Mammary epithelial cell (primary cell): ENCODE measurements at regions of chr22 and their contacts with region 1.

Region 1: GRCh38 chr22:35840302-35840739 is 122.6 kb downstream of the APOL5 start:
- DNase-seq: peak; percentile 98
- H3K4me3 ChIP-seq: peak overlapping the region; percentile 65 to 83 (median 83)
- H3K27ac ChIP-seq: peak overlapping the region; percentile 82
- H3K4me1 ChIP-seq: peaks cover 22% of the 10 kb centered on the region
- H3K27me3 ChIP-seq: no peaks in the 10 kb centered on the region
- CTCF ChIP-seq: no peak

Region 2: DNA sequence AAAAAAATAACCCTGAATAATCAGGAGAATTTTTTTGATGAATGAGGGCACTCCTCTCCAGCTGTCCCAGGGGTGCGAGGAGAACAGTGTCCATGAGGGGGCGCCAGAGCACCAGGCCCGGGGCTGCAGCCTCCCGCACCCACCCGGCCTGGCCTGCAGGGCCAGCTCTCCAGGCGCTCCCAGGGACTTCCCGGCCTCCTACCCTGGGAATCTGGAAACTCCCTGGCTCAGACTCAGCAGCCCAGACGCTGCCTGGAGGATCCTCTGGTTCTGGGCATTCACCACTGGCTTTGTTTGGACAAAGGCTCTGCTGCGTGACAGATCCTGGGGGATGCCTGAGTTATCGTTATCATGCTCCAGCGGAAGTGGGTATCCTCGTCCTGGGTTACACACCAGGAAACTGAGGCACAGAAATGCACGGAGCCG is 409.4 kb before region 1 on chr22:
- CTCF ChIA-PET with region 1: no interaction called
- dilution Hi-C with region 1: no loop called
- in situ Hi-C with region 1: no loop called
- intact Hi-C with region 1: loop called (anchors 5 kb)
- DNase-seq: peak; percentile 87
- H3K4me3 ChIP-seq: no peak overlapping the region
- H3K27ac ChIP-seq: peak overlapping the region; percentile 44
- H3K4me1 ChIP-seq: peaks cover 16% of the 10 kb centered on the region
- H3K27me3 ChIP-seq: no peaks in the 10 kb centered on the region
- CTCF ChIP-seq: peak; percentile 82 to 98

Region 3: DNA sequence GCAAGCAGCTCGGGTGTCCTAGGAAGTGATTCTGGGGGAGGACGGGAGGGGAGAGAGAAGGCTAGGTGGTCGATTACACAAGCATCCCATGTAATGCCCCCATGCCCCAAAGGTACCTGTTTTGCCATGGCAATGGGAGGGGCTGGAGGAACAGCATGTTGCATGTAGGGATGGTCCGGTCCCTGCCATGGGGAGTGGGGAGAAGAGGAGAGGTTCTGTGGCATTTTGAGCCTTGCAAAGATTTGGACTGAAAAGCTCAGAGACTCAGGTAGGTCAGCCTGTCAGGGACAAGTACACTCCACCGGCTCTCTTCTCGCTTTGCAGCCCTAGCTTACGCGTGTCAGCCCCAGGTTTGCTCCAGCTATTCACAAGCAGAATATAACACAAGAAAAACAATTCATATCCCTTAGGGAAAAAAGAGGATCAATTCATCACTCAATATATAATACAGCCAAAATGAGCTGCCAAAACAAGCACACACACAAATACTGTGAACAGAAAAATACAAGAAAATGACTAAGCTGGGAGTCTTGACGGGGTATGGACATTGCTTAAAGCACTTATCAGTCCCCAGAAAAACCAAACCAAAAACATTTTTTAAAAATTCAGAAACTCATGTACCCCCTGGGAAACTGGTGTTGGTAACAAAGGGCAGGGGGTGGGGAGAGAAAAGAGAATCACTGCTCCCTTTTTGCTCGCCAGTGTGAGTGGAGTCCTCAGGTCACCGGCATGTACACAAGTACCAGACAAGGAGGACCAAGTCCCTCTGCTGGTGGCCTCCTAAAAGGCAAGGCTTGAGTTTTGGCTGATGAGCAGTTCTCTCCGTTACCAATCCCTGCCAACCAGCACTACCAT is 101.0 kb before region 1 on chr22:
- CTCF ChIA-PET with region 1: no interaction called
- dilution Hi-C with region 1: no loop called
- in situ Hi-C with region 1: no loop called
- intact Hi-C with region 1: no loop called
- DNase-seq: no peak
- H3K4me3 ChIP-seq: no peak overlapping the region
- H3K27ac ChIP-seq: no peak overlapping the region
- H3K4me1 ChIP-seq: peaks cover 14% of the 10 kb centered on the region
- H3K27me3 ChIP-seq: no peaks in the 10 kb centered on the region
- CTCF ChIP-seq: peak; percentile 18 to 38

Region 4: DNA sequence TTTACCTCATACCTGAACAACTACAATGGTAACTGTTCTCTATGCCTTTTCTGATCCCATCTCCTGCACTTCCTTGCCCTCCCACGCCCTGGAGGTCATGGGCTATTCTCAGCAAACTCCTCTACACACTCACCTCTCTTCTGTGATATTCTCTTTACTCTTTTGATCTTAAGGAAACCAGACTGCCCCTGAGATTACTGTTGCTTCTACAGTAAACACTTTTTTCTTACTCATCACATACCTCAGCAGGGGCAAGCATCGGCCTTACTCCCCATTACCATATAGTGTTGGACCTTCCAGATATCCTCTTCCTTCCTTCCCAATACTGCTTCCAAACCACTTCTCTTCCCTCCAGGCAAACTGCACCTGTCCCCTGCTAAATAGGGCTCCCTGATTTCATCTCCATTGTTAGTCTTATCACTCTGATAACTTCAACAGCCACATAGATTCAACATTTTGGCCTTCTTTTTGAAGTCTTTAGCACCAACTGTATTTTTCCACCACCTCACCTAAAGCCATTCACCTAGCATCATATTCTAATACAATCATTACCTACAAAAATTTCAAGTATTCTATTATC is 47.1 kb after region 1 on chr22:
- CTCF ChIA-PET with region 1: no interaction called
- dilution Hi-C with region 1: loop called (anchors 5 kb)
- in situ Hi-C with region 1: no loop called
- intact Hi-C with region 1: no loop called
- DNase-seq: no peak
- H3K4me3 ChIP-seq: no peak overlapping the region
- H3K27ac ChIP-seq: no peak overlapping the region
- H3K4me1 ChIP-seq: peaks cover 17% of the 10 kb centered on the region
- H3K27me3 ChIP-seq: no peaks in the 10 kb centered on the region
- CTCF ChIP-seq: no peak

Region 5: GRCh38 chr22:35914665-35915476 is 74.5 kb after region 1 on chr22:
- CTCF ChIA-PET with region 1: no interaction called
- dilution Hi-C with region 1: no loop called
- in situ Hi-C with region 1: no loop called
- intact Hi-C with region 1: loop called (anchors 1 kb)
- DNase-seq: peak; percentile 91
- H3K4me3 ChIP-seq: peak overlapping the region; percentile 38 to 49 (median 41)
- H3K27ac ChIP-seq: peak overlapping the region; percentile 74
- H3K4me1 ChIP-seq: peaks cover 52% of the 10 kb centered on the region
- H3K27me3 ChIP-seq: no peaks in the 10 kb centered on the region
- CTCF ChIP-seq: no peak

Region 6: DNA sequence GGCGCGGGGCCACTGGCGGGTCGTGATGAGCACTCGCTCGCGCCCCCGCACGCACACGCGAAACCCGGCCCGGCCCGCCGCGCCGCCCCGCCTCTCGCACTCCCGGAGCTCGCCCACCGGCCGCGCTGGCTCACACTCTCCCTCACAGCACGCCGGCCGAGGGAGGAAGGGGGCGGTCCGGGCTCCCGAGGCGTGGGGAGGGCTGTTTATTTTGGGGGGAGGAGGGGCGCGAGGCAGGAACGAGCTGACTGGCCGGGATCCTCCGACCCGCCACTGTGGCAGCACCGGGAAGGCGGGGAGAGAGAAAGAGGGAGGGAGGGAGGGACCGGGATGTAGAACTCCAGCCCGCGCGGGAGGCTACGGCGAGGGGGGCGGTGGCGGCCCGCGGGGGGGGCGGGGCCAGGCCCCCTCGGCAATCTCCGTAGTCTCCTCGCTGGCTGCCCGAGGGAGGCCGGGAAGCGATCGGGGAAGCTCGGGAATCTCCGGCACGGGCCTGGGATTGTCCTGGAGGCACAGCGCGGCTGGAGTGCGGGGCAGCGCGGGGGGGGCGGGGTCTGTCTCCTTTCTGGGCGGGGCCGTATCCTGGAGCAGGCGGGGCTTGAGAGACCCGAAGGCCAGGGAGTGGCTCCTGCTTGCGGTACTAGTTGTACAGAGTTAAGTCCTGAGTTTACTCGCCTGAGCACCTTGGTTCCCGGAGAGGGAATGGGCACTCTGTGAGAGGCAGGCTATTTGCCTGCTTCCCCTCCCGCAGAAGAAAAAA is 188.5 kb after region 1 on chr22 and contains the start of gene RBFOX2:
- CTCF ChIA-PET with region 1: no interaction called
- dilution Hi-C with region 1: no loop called
- in situ Hi-C with region 1: no loop called
- intact Hi-C with region 1: loop called (anchors 1 kb)
- DNase-seq: peak; percentile 96
- H3K4me3 ChIP-seq: peak within 1 kb of the TSS; percentile 84 to 92 (median 86)
- H3K27ac ChIP-seq: peak within 1 kb of the TSS; percentile 66
- H3K4me1 ChIP-seq: peaks cover 16% of the 10 kb centered on the region
- H3K27me3 ChIP-seq: no peaks in the 10 kb centered on the region
- CTCF ChIP-seq: no peak
- total RNA-seq, gene RBFOX2: 126 to 137 TPM

Region 7: GRCh38 chr22:36123673-36124630 is 283.6 kb after region 1 on chr22:
- CTCF ChIA-PET with region 1: no interaction called
- dilution Hi-C with region 1: no loop called
- in situ Hi-C with region 1: no loop called
- intact Hi-C with region 1: loop called (anchors 2 kb)
- DNase-seq: peak; percentile 88
- H3K4me3 ChIP-seq: peak overlapping the region in 1 of 3 experiments; percentile 45
- H3K27ac ChIP-seq: peak overlapping the region; percentile 23
- H3K4me1 ChIP-seq: no peaks in the 10 kb centered on the region
- H3K27me3 ChIP-seq: no peaks in the 10 kb centered on the region
- CTCF ChIP-seq: peak; percentile 91 to 99